ENCODE measurements at regions of chr10 and their contacts with region 1.

Region 1: GRCh38 chr10:16853201-16853600 is 36.0 kb upstream of the RSU1 start:
- DNase-seq: no peak
- H3K4me3 ChIP-seq: no peak overlapping the region
- H3K27ac ChIP-seq: peak overlapping the region; percentile 11 to 33
- H3K4me1 ChIP-seq: peaks cover 0 to 24% (median 10%) of the 10 kb centered on the region in 4 donors
- H3K27me3 ChIP-seq: no peaks in the 10 kb centered on the region
- CTCF ChIP-seq: peak in 1 of 2 experiments; percentile 6

Region 2: GRCh38 chr10:16828114-16828568 is 25.1 kb before region 1 on chr10:
- intact Hi-C with region 1: no loop called
- DNase-seq: peak; percentile 39 to 77
- H3K4me3 ChIP-seq: peak overlapping the region; percentile 32 to 40
- H3K27ac ChIP-seq: peak overlapping the region; percentile 60 to 68
- H3K4me1 ChIP-seq: peaks cover 0 to 36% (median 18%) of the 10 kb centered on the region in 4 donors
- H3K27me3 ChIP-seq: no peaks in the 10 kb centered on the region
- CTCF ChIP-seq: peak; percentile 55 to 80

Region 3: GRCh38 chr10:17074541-17074847 is 221.3 kb after region 1 on chr10:
- intact Hi-C with region 1: no loop called
- DNase-seq: no peak
- H3K4me3 ChIP-seq: no peak overlapping the region
- H3K27ac ChIP-seq: peak overlapping the region in 1 of 2 donors; percentile 77
- H3K4me1 ChIP-seq: peaks cover 0 to 30% (median 13%) of the 10 kb centered on the region in 4 donors
- H3K27me3 ChIP-seq: no peaks in the 10 kb centered on the region
- CTCF ChIP-seq: no peak

Region 4: DNA sequence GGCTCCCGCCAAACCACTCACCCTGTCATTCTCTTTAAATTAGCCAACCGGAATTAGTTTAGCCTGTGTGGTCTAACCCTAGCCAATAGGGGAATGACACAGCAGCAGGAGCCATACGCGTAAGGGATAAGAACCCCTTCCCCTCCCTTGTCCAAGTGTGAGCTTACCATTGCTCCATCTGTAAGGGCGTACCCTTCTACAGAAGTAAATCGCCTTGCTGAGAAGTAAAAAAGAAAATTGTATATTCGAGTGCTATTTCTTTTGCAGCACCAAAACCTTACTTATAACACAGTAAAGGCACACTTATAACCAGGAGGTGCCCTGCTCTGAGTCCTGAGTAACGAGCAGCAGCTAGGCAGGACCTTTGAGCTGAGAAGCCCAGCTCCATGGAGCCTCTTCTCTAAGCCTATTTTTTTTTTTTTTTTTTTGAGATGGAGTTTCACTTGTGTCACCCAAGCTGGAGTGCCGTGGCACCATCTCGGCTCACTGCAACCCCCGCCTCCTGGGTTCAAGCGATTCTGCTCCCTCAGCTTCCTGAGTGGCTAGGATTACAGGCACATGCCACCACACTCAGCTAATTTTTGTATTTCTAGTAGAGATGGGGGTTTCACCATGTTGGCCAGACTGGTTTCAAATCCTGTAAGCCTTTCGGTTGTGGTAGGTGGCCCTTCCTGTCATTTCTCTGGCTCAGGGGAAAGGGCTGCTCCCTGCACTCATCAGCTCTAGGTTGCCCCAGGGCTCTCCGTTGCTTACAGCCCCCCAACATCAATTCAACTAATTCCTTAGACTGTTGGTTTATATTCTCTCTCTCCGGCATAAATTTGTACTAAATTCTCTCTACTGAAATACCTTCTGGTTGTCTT is 1724.9 kb after region 1 on chr10:
- intact Hi-C with region 1: loop called (anchors 5 kb)
- DNase-seq: no peak
- H3K4me3 ChIP-seq: no peak overlapping the region
- H3K27ac ChIP-seq: no peak overlapping the region
- H3K4me1 ChIP-seq: no peaks in the 10 kb centered on the region
- H3K27me3 ChIP-seq: no peaks in the 10 kb centered on the region
- CTCF ChIP-seq: no peak

Measured in tibial artery (tissue), 4 donors.